Activated CD8-positive, alpha-beta T cell treated with anti-CD3 and anti-CD28 coated beads for 36 hours (primary cell): ENCODE measurements at regions of chr1 and their contacts with region 1.

Region 1: GRCh38 chr1:2821966-2822620 is 20.6 kb upstream of the TTC34 start:
- DNase-seq: peak; percentile 59
- ATAC-seq: peak; percentile 92
- H3K4me3 Mint-ChIP-seq: no peak overlapping the region
- H3K27ac Mint-ChIP-seq: no peak overlapping the region
- H3K4me1 Mint-ChIP-seq: peaks cover 2% of the 10 kb centered on the region
- H3K27me3 Mint-ChIP-seq: no peaks in the 10 kb centered on the region
- CTCF ChIP-seq: peak; percentile 81

Region 2: DNA sequence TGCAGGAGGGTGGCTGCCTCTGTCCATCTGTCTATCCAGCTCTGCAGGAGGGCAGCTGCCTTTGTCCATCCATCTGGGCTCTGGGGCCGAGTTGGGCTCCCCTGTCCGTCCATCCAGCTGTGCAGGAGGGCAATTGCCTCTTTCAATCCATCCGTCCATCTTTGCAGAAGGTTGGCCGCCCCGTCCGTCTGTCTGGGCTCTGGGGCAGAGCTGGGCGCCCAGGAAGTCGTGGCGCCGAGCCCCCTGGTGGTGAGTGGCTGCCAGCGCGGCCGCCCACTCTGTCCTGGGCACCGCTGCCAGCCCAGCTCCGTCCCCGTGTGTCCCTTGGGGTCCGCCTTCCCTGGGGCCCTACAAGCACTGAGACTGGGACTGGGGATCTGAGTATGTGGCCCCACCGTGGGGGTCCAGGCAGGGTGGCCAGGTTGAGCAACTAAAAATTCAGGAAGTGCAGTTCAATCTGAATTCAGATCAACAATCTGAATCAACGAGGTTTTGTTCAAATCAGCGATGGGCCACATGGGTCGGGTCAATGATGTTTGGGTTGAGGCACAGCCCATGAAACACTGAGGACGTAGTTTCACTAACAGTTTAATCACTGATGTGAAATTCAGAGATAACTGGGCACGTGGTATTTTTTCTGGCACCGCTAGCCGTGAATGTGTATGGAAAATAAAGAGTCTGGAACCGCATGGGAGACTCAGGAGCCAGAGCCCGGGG is 100.0 kb after region 1 on chr1:
- CTCF ChIA-PET with region 1: interaction called, 12 read pairs
- POLR2A ChIA-PET with region 1: no interaction called
- intact Hi-C with region 1: no loop called
- DNase-seq: peak; percentile 34
- ATAC-seq: peak; percentile 56
- H3K4me3 Mint-ChIP-seq: no peak overlapping the region
- H3K27ac Mint-ChIP-seq: no peak overlapping the region
- H3K4me1 Mint-ChIP-seq: no peaks in the 10 kb centered on the region
- H3K27me3 Mint-ChIP-seq: peaks cover 4% of the 10 kb centered on the region
- CTCF ChIP-seq: peak; percentile 77